Transverse colon (tissue), 4 donors: ENCODE measurements at regions of chr6 and their contacts with region 1.

Region 1: GRCh38 chr6:71190809-71191208 is 97.8 kb upstream of the OGFRL1 start:
- DNase-seq: no peak
- H3K4me3 ChIP-seq: no peak overlapping the region
- H3K27ac ChIP-seq: no peak overlapping the region
- H3K4me1 ChIP-seq: no peaks in the 10 kb centered on the region
- H3K27me3 ChIP-seq: no peaks in the 10 kb centered on the region
- CTCF ChIP-seq: peak in 2 of 5 experiments; percentile 7 to 29
- EP300 ChIP-seq: no peak
- POLR2A ChIP-seq: no peak

Region 2: GRCh38 chr6:71510057-71510713 is 319.4 kb after region 1 on chr6:
- in situ Hi-C with region 1: loop called in 1 of 4 experiments (anchors 25 kb)
- intact Hi-C with region 1: no loop called
- DNase-seq: peak; percentile 27
- H3K4me3 ChIP-seq: no peak overlapping the region
- H3K27ac ChIP-seq: peak overlapping the region in 1 of 4 donors; percentile 22
- H3K4me1 ChIP-seq: peaks cover 0 to 8% (median 2%) of the 10 kb centered on the region in 4 donors
- H3K27me3 ChIP-seq: no peaks in the 10 kb centered on the region
- CTCF ChIP-seq: peak; percentile 32 to 57 (median 43)
- EP300 ChIP-seq: no peak
- POLR2A ChIP-seq: no peak